B cell (primary cell): ENCODE measurements at regions of chr18 and their contacts with region 1.

Region 1: GRCh38 chr18:24187049-24187448 is 48.2 kb downstream of the CABYR start:
- DNase-seq: peak; percentile 52
- ATAC-seq: peak; percentile 58
- H3K4me3 ChIP-seq: peak overlapping the region in 1 of 5 experiments; percentile 28
- H3K4me3 Mint-ChIP-seq: peak overlapping the region; percentile 79
- H3K27ac ChIP-seq: peak overlapping the region in 1 of 2 donors; percentile 11
- H3K27ac Mint-ChIP-seq: no peak overlapping the region
- H3K4me1 ChIP-seq: peaks cover 11 to 14% of the 10 kb centered on the region in 2 donors
- H3K4me1 Mint-ChIP-seq: peaks cover 23% of the 10 kb centered on the region
- H3K27me3 ChIP-seq: peaks cover 0 to 3% (median 0%) of the 10 kb centered on the region in 4 experiments
- H3K27me3 Mint-ChIP-seq: peaks cover 5% of the 10 kb centered on the region
- CTCF ChIP-seq: no peak

Region 2: DNA sequence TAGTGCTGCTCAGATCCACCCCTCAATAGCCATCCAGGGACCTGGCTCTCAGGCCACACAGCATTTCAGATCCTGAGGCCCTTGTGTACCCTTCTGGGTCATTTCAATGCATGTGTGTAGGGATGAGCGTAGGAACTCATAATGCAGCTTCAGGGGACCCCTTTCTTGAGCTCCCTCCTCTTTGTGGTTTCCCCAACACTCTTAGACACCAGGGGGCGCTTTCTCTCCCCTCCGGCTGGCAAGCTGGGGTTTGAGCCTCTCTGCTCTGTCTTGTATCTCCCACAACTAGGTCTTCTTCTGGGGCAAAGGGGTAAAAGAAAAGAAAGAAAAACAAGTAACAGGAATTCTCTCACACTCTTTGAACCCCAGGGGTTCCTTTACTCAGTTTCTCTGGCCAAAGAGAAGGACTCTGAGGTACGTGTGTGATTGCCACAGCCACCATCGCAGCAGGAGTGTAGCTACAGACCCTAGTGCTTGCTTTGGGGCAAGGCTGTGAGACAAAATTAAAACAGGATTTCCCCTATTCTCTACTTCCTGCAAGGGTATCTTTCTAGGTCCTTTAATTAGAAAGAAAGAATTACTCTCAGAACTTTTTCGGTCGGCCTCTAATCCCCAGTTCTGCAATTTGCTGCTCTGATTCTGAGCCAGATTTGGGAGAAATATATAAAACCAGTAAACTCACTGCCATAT is 10.2 kb before region 1 on chr18:
- CTCF ChIA-PET with region 1: interaction called, 21 read pairs
- POLR2A ChIA-PET with region 1: no interaction called
- intact Hi-C with region 1: no loop called
- DNase-seq: peak; percentile 82
- ATAC-seq: peak; percentile 88
- H3K4me3 ChIP-seq: peak overlapping the region in 4 of 5 experiments; percentile 15 to 56 (median 38)
- H3K4me3 Mint-ChIP-seq: peak overlapping the region; percentile 81
- H3K27ac ChIP-seq: peak overlapping the region; percentile 78 to 87
- H3K27ac Mint-ChIP-seq: peak overlapping the region; percentile 92
- H3K4me1 ChIP-seq: peaks cover 22 to 24% of the 10 kb centered on the region in 2 donors
- H3K4me1 Mint-ChIP-seq: peaks cover 25% of the 10 kb centered on the region
- H3K27me3 ChIP-seq: no peaks in the 10 kb centered on the region
- H3K27me3 Mint-ChIP-seq: no peaks in the 10 kb centered on the region
- CTCF ChIP-seq: peak; percentile 68